Left ventricle myocardium inferior (tissue), 1 donor: ENCODE measurements at regions of chr15 and their contacts with region 1.

Region 1: DNA sequence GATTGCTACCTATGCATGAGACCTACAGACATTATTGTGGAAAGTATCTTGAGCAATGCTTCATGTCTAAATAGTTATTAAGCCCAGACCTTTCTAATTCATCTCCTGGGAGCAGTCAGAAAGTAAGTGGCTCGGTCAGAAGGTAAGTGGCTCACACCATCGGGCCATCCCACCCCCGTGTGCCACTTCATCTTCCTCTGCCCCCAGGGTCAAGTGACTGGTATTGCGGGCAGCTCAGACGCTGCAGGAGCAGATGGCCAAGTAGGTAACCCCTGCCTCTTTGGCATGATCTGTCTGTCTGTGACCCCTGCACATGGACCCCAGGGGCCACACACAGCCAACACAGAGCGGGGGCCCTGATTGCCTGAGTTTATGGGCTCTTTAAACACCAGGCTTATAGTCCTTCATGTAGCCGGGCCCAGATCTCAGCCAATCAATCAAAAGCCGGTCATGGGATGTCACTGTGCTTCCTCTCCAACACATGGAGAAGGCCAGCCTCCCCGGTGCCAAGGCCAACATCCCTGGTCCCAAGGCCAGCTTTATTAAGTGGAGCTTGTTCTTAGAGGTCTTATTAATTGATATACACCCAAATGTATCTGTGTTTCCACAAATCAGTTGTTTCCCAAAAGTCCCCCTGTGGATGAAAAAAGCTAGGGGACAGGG is 42.9 kb downstream of the LARP6 start:
- DNase-seq: no peak
- H3K4me3 ChIP-seq: no peak overlapping the region
- H3K27ac ChIP-seq: no peak overlapping the region
- H3K4me1 ChIP-seq: peaks cover 12% of the 10 kb centered on the region
- H3K27me3 ChIP-seq: no peaks in the 10 kb centered on the region
- CTCF ChIP-seq: no peak

Region 2: GRCh38 chr15:70679919-70680231 is 131.2 kb before region 1 on chr15:
- intact Hi-C with region 1: loop called (anchors 5 kb)
- DNase-seq: no peak
- H3K4me3 ChIP-seq: no peak overlapping the region
- H3K27ac ChIP-seq: peak overlapping the region; percentile 48
- H3K4me1 ChIP-seq: peaks cover 27% of the 10 kb centered on the region
- H3K27me3 ChIP-seq: no peaks in the 10 kb centered on the region
- CTCF ChIP-seq: no peak

Region 3: GRCh38 chr15:70690491-70691257 is 120.4 kb before region 1 on chr15:
- intact Hi-C with region 1: no loop called
- DNase-seq: no peak
- H3K4me3 ChIP-seq: no peak overlapping the region
- H3K27ac ChIP-seq: peak overlapping the region; percentile 21
- H3K4me1 ChIP-seq: peaks cover 56% of the 10 kb centered on the region
- H3K27me3 ChIP-seq: no peaks in the 10 kb centered on the region
- CTCF ChIP-seq: no peak

Region 4: GRCh38 chr15:70701891-70702568 is 109.0 kb before region 1 on chr15:
- intact Hi-C with region 1: no loop called
- DNase-seq: no peak
- H3K4me3 ChIP-seq: peak overlapping the region; percentile 60
- H3K27ac ChIP-seq: peak overlapping the region; percentile 83
- H3K4me1 ChIP-seq: peaks cover 87% of the 10 kb centered on the region
- H3K27me3 ChIP-seq: no peaks in the 10 kb centered on the region
- CTCF ChIP-seq: no peak

Region 5: DNA sequence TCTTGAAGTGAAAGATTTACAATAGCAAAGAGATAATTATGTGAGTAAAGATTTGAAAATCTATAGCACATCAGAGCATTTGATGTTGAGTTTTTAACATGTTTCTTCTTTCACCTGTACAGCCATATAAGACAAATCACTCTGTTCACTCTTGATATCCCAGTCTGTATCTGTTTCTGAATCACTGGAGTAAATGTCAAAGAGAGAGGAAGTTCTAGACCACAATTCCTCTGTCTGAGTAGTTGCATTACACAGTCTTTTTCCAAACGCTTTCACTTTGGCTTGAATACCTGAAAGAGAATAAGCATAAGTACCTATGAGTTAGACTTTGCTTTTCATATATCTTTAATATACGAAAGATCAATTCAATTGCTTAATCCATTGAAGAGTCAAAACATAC is 71.3 kb after region 1 on chr15:
- intact Hi-C with region 1: no loop called
- DNase-seq: no peak
- H3K4me3 ChIP-seq: no peak overlapping the region
- H3K27ac ChIP-seq: no peak overlapping the region
- H3K4me1 ChIP-seq: no peaks in the 10 kb centered on the region
- H3K27me3 ChIP-seq: no peaks in the 10 kb centered on the region
- CTCF ChIP-seq: no peak

Region 6: DNA sequence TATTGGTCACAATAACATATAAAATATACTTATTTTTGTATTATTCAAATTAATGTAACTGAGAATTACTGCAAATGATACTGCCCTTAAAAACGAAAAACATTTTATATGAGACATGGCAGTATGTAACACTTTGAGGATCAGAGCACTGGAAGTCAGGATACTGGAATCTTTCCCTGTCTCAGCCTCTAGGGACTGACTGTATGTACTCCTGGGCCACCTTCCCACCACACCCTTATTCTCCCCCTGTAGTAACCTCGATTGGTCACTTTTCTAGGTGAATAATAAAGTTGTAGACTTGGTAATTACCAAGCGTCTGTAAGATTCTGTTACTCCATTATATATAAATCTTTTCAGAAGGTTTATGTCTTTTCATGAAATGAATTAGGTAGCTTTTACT is 124.6 kb after region 1 on chr15:
- intact Hi-C with region 1: no loop called
- DNase-seq: no peak
- H3K4me3 ChIP-seq: no peak overlapping the region
- H3K27ac ChIP-seq: peak overlapping the region; percentile 60
- H3K4me1 ChIP-seq: peaks cover 15% of the 10 kb centered on the region
- H3K27me3 ChIP-seq: no peaks in the 10 kb centered on the region
- CTCF ChIP-seq: no peak